ENCODE measurements at regions of chr3 and their contacts with region 1.

Region 1: DNA sequence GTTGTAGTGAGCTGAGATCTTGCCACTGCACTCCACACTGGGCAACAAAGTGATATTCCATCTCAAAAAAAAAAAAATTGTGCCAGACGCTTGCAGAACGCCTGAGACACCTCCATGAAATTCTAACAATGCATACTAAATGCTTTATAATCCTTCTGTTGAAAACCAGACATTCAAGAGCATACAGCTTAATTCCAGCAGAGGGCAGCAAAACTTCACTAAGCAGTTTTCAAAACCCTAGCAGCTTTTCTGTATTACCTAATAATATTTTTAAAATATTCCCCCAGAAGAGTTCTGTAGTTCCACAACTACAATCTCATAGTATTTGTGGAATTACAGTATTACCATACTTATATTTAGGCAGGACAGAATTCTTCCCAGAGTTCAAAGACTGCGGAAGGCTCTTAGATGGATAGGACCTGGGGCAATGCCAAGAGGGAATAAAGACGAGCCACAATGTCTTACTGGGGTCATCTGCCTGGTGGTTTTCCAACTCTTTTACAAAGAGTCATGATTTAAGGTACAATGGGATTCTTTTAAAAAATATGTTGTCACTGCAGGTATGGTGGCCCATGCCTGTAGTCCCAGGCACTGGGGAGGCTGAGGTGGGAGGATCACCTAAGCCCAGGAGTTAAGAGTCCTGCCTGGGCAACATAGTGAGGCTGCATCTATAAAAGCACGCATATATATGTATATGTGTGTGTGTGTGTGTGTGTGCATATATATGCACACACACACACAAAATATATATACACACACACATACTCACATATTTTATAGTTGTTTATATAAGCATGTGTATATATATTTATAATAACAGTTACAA is 19.6 kb upstream of the TASOR start:
- DNase-seq: peak; percentile 70
- H3K4me3 Mint-ChIP-seq: no peak overlapping the region
- H3K27ac Mint-ChIP-seq: no peak overlapping the region
- H3K4me1 Mint-ChIP-seq: peaks cover 17% of the 10 kb centered on the region
- H3K27me3 Mint-ChIP-seq: no peaks in the 10 kb centered on the region

Region 2: GRCh38 chr3:56370991-56371775 is 331.5 kb before region 1 on chr3:
- CTCF ChIA-PET with region 1: no interaction called
- intact Hi-C with region 1: no loop called
- DNase-seq: no peak
- H3K4me3 Mint-ChIP-seq: no peak overlapping the region
- H3K27ac Mint-ChIP-seq: no peak overlapping the region
- H3K4me1 Mint-ChIP-seq: no peaks in the 10 kb centered on the region
- H3K27me3 Mint-ChIP-seq: peaks cover 4% of the 10 kb centered on the region

Region 3: GRCh38 chr3:56753206-56753820 is 50.6 kb after region 1 on chr3:
- CTCF ChIA-PET with region 1: interaction called, 7 read pairs
- intact Hi-C with region 1: loop called (anchors 2 kb)
- DNase-seq: peak; percentile 73
- H3K4me3 Mint-ChIP-seq: no peak overlapping the region
- H3K27ac Mint-ChIP-seq: peak overlapping the region; percentile 44
- H3K4me1 Mint-ChIP-seq: peaks cover 56% of the 10 kb centered on the region
- H3K27me3 Mint-ChIP-seq: no peaks in the 10 kb centered on the region

Region 4: GRCh38 chr3:56855856-56856512 is 153.3 kb after region 1 on chr3:
- CTCF ChIA-PET with region 1: no interaction called
- intact Hi-C with region 1: loop called (anchors 2 kb)
- DNase-seq: peak; percentile 62
- H3K4me3 Mint-ChIP-seq: no peak overlapping the region
- H3K27ac Mint-ChIP-seq: no peak overlapping the region
- H3K4me1 Mint-ChIP-seq: peaks cover 45% of the 10 kb centered on the region
- H3K27me3 Mint-ChIP-seq: no peaks in the 10 kb centered on the region

Region 5: DNA sequence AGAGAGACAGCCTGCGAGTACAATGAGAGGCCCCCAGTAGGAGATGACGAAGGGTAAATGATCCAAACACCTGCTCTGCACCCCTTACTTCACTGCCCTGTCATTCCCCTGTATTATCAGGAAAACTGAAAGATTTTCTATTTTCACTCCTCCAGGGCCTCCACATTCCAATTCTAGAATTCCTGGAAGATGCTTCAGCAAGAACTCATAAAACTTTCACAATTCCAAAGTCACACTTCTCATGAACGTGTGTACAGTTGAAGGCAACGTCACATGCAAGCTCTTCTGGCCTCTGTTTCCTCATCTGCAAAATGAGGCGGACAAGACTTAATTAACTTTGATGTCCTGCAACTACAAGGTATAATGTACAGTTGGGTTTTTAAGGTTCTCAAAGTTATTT is 295.0 kb after region 1 on chr3:
- CTCF ChIA-PET with region 1: interaction called, 16 read pairs
- intact Hi-C with region 1: no loop called
- DNase-seq: no peak
- H3K4me3 Mint-ChIP-seq: no peak overlapping the region
- H3K27ac Mint-ChIP-seq: no peak overlapping the region
- H3K4me1 Mint-ChIP-seq: peaks cover 3% of the 10 kb centered on the region
- H3K27me3 Mint-ChIP-seq: no peaks in the 10 kb centered on the region